SK-N-SH (cell line): ENCODE measurements at regions of chr2 and their contacts with region 1.

Region 1: DNA sequence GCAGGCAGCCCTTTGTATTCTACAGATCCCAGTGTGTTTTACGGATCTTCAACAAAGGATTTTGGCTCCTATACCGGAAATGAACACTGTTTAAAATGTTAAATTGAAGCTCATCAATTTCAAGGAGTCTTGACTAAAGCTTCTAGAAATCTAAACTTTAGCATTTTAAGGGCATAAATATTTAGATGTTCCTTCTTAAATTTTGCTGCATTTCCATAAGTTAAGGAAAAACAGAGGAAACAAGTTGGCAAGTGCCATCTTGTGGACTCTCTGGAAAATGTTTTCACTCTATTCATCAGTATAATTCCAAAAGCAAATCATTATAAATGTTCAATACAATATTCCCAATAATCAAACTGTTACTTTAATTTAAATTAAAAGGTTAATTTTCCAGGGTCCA is 19.6 kb downstream of the CHN1 start:
- DNase-seq: peak; percentile 27
- H3K4me3 ChIP-seq: no peak overlapping the region
- H3K27ac ChIP-seq: 0 out of 4 replicates have a peak overlapping the region, but pooled peaks of 1 of the 2 experiments have one; percentile 2
- H3K4me1 ChIP-seq: peaks cover 0 to 2% of the 10 kb centered on the region in 2 experiments; a peak in 2 of 4 replicates
- H3K27me3 ChIP-seq: no peaks in the 10 kb centered on the region
- CTCF ChIP-seq: peak; percentile 83
- EP300 ChIP-seq: no peak
- RAD21 ChIP-seq: peak; percentile 87

Region 2: DNA sequence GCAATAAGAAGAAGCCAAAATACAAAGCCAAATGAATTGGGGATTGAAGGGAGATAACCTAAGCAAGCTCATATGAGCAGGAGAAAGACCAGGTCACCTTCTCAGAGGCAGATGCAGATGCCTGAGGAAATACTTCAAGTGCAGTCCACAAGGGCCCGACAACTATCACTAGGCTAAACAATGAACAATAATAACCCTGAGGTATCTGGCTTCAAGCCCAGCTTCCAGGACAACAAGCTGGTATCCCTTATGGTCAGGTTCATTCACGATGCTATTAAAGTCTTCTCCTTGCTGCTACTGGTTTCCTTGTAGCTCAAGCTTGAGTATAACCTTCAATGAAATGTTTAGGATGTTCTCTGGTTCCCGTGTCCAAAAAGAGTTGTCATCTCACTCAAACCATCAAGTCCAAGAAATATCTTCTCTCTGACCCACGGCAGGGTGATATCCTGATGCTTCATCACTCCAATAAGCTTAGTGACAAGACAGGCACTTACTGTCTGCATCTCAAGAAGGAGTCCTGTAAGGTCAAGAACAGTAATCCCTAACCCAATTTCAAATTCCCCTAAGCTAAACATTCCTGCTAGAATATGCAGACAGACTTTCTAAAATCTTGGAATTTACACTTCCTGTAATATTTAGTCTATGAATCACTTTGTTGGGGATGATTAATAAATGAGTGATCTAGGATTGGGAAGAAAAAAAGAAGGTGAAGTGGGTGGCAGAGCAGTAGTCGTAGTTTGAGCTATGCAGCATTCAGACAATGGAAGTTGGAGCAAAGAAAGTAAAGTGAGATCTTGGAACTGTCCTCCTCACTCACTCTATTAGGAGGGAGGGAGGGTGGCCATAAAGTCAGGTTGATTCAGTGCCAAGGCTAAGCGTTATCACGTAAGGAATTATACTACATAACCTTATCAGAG is 13.5 kb before region 1 on chr2:
- CTCF ChIA-PET with region 1: interaction called, 29 read pairs
- POLR2A ChIA-PET with region 1: no interaction called
- DNase-seq: peak; percentile 25
- H3K4me3 ChIP-seq: no peak overlapping the region
- H3K27ac ChIP-seq: peak overlapping the region; percentile 65 to 73; a peak in 3 of 4 replicates
- H3K4me1 ChIP-seq: peaks cover 4 to 14% of the 10 kb centered on the region in 2 experiments; a peak in 3 of 4 replicates
- H3K27me3 ChIP-seq: no peaks in the 10 kb centered on the region
- CTCF ChIP-seq: no peak
- EP300 ChIP-seq: peak in 1 of 2 experiments; percentile 64; a peak in 1 of 4 replicates
- RAD21 ChIP-seq: no peak

Region 3: DNA sequence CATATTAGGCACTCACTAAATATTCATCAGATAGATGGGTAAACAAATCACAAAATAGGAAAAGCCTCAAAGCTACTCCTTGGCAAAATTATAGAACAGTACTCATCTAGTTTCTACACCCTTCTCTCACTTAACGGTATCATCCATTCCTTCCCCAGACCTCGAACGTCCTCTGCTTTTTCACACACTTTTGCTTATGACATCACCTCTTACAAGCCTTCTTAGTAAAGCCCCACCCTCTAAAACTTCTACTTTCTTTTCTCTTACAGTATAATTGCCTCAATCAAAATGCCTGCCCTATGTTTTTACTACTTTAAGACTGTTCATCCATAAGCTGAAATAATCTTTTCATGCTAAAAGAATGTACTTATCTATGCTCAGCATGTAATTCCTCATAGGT is 11.5 kb after region 1 on chr2:
- CTCF ChIA-PET with region 1: interaction called, 11 read pairs
- POLR2A ChIA-PET with region 1: no interaction called
- DNase-seq: no peak
- H3K4me3 ChIP-seq: no peak overlapping the region
- H3K27ac ChIP-seq: no peak overlapping the region
- H3K4me1 ChIP-seq: peaks cover 0 to 25% of the 10 kb centered on the region in 2 experiments; a peak in 2 of 4 replicates
- H3K27me3 ChIP-seq: no peaks in the 10 kb centered on the region
- CTCF ChIP-seq: no peak
- EP300 ChIP-seq: no peak
- RAD21 ChIP-seq: no peak

Region 4: DNA sequence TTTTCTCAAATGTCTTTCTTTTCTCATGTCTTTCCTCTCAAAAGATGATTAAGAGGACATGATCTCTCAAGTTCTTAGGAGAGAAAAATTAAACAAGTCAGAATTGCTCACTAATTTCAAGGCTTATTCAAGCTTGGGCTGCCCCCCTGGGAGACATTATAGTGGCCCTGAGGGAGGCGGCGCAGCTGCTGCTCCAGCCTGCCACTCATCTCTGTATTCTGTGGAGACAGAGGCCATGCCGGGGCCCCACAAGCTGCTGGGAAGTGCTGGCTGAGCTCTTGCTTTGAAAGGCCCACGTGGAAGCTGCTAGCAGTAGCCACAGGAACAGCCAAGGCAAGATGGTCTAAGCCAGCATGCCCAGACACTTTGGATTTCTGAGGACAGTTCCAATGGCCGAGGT is 749.0 kb after region 1 on chr2:
- CTCF ChIA-PET with region 1: no interaction called
- POLR2A ChIA-PET with region 1: no interaction called
- DNase-seq: no peak
- H3K4me3 ChIP-seq: no peak overlapping the region
- H3K27ac ChIP-seq: no peak overlapping the region
- H3K4me1 ChIP-seq: no peaks in the 10 kb centered on the region
- H3K27me3 ChIP-seq: no peaks in the 10 kb centered on the region; the same call in 1 of the 2 replicates
- CTCF ChIP-seq: no peak
- EP300 ChIP-seq: no peak
- RAD21 ChIP-seq: no peak